ENCODE measurements at regions of chr2 and their contacts with region 1.

Region 1: DNA sequence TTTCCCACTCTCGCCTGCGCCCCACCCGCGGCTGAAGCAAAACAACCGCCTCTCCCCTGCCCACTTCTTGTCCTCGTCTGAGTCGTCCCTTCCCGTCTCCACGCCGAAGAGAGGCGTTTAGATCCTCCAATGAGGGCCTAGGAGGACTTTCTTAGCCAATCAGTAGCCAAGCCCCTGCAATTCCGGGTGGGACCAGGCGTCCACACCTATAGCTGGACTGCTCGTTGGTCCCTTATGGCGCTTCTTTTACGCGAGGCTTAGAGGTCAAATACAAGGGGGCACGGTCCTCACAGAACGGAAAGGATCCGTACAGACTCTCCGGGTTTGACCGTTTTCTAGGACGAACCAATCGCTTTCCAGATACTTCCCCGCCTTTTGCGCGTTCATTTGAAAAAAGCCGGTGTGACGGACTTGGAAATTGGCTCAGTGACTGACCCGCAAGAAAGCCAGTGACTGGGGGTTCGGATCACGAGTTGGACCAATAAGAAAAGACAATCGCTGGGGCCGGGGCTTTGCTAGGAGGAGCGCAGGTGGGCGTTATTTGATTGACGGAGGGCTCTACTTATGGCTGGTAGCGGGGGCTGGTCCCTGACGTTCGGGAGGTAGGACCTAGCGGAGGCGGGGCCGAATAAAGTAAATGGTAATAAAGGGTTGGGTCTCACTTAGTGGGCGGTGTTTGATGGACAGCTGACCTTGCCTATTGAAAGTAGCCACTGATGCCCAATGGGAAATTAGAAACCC is 565 bp upstream of the PPM1B start:
- DNase-seq: peak; percentile 98 to 99
- ATAC-seq: peak; percentile 96
- H3K4me3 ChIP-seq: peak overlapping the region in 1 of 2 donors; percentile 33
- H3K27ac ChIP-seq: peak overlapping the region; percentile 36 to 96
- H3K4me1 ChIP-seq: peaks cover 1 to 4% of the 10 kb centered on the region in 2 donors
- H3K27me3 ChIP-seq: no peaks in the 10 kb centered on the region

Region 2: GRCh38 chr2:44087036-44087713 is 80.9 kb before region 1 on chr2:
- intact Hi-C with region 1: loop called (anchors 5 kb)
- DNase-seq: peak; percentile 91 to 95
- ATAC-seq: peak; percentile 98
- H3K4me3 ChIP-seq: peak overlapping the region in 1 of 2 donors; percentile 42
- H3K27ac ChIP-seq: peak overlapping the region; percentile 4 to 17
- H3K4me1 ChIP-seq: no peaks in the 10 kb centered on the region
- H3K27me3 ChIP-seq: no peaks in the 10 kb centered on the region

Region 3: DNA sequence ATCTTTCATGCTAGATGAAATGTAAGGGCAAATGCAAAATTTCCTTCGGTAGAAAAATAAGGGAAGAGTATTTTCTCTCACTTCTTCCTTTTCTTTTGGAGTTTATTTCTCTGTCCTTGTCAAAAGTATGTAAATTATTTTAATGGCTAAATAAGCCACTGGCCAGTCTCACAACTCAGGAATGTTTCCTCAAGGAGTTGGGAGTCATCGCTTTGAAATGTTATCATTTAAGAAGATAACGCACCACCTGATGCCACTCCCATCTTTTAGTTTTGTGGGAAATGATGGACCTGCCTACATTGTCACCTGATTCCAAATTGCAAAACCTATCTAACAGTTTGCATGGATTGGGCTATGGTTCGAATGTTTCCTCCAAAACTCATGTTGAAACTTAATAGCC is 31.9 kb before region 1 on chr2:
- intact Hi-C with region 1: loop called in 1 of 2 experiments (anchors 1 kb)
- DNase-seq: no peak
- ATAC-seq: no peak
- H3K4me3 ChIP-seq: no peak overlapping the region
- H3K27ac ChIP-seq: peak overlapping the region; percentile 57 to 95
- H3K4me1 ChIP-seq: peaks cover 4 to 12% of the 10 kb centered on the region in 2 donors
- H3K27me3 ChIP-seq: no peaks in the 10 kb centered on the region

Region 4: GRCh38 chr2:44233450-44234128 is 65.5 kb after region 1 on chr2:
- intact Hi-C with region 1: loop called in 1 of 2 experiments (anchors 10 kb)
- DNase-seq: no peak
- ATAC-seq: no peak
- H3K4me3 ChIP-seq: no peak overlapping the region
- H3K27ac ChIP-seq: no peak overlapping the region
- H3K4me1 ChIP-seq: no peaks in the 10 kb centered on the region
- H3K27me3 ChIP-seq: no peaks in the 10 kb centered on the region

Region 5: DNA sequence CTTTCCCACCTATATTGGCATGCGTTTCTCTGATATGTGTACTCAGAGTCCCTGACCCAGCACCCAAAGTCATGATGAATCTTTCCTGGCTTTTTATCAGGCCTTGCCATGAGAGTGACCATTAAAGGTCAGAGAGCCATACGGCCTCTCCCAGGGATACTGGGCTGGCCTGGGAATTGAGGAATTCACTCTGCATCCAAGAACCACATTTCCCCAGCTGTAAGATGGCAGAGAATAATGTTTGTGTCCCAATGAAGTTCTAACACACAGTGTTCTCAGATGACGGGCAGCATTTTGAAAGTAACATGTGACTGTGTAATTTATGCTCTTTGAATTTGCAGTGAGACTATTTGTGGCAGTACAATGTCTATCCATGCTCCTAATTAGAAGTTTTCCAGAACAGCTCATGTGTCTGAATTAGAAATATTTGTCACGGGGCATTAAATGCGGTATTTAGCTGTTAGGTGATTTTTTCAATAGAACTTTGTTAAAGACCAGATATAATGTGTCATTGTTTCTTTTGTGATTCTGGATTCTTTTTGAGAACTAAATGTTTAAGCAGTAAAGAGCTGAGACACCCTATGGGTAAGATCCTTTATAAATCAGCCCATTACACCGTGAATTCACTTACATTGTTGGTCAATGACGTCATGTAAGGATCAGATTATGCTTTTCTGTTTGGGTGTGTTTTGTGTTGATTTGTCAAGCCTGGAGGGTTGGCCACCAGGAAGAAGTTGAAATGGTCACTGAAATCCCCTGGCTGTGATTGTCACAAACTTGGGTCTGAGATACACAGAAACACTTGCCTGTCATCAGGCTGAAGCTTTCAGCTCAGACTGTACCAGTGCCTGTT is 99.9 kb after region 1 on chr2:
- intact Hi-C with region 1: loop called in 1 of 2 experiments (anchors 2 kb)
- DNase-seq: no peak
- ATAC-seq: peak; percentile 92
- H3K4me3 ChIP-seq: no peak overlapping the region
- H3K27ac ChIP-seq: peak overlapping the region; percentile 83
- H3K4me1 ChIP-seq: peaks cover 0 to 9% of the 10 kb centered on the region in 2 donors
- H3K27me3 ChIP-seq: no peaks in the 10 kb centered on the region

Region 6: DNA sequence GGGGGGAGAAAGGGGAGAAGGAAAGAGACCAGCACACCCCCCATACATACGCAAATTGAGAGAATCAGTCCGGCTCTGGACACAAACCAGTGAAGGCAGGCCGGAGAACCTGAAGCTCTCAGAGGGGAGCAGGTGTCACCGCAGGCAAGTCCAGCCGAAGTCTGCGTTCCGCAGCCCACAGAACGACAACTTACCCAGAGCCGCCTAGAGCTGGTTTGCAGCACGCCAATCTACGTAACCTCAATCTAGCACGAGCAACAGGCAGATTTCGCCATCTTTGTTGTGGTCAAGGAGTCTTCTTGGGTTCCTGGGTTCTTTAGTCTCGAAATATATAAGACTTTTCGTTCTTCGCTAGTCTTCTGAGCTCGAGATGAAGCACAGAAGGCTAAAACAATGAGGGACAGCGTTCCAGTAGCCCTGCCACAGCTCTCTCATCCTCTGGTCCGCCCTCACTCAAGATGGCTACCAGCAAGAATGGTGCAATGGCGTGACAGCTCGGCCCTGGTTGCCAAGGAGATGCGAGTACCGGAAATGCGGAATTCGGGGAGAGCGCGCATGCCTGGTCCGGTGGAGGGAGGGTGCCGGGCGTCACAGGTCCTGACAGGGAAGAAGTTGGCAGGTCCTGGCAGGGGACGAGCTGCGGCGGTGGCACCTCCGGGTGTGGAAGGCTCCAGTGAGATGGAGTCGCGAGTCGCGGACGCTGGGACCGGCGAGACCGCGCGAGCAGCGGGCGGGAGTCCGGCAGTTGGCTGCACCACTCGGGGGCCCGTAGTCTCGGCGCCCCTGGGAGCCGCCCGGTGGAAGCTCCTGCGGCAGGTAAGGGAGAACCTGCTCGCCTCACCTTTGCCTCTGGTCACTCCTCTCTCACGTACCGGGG is 193.5 kb after region 1 on chr2 and contains the starts of genes CAMKMT and PREPL:
- intact Hi-C with region 1: loop called in 1 of 2 experiments (anchors 1 kb)
- DNase-seq: peak; percentile 99
- ATAC-seq: peak; percentile 99
- H3K4me3 ChIP-seq: peak within 1 kb of the TSS; percentile 82 to 90
- H3K27ac ChIP-seq: peak within 1 kb of the TSS; percentile 85 to 87
- H3K4me1 ChIP-seq: peaks cover 0 to 2% of the 10 kb centered on the region in 2 donors
- H3K27me3 ChIP-seq: no peaks in the 10 kb centered on the region
- total RNA-seq, gene CAMKMT: 14.1 to 15.2 TPM
- total RNA-seq, gene PREPL: 49.8 to 60.3 TPM